GM13976 (cell line): ENCODE measurements at regions of chr7 and their contacts with region 1.

Region 1: DNA sequence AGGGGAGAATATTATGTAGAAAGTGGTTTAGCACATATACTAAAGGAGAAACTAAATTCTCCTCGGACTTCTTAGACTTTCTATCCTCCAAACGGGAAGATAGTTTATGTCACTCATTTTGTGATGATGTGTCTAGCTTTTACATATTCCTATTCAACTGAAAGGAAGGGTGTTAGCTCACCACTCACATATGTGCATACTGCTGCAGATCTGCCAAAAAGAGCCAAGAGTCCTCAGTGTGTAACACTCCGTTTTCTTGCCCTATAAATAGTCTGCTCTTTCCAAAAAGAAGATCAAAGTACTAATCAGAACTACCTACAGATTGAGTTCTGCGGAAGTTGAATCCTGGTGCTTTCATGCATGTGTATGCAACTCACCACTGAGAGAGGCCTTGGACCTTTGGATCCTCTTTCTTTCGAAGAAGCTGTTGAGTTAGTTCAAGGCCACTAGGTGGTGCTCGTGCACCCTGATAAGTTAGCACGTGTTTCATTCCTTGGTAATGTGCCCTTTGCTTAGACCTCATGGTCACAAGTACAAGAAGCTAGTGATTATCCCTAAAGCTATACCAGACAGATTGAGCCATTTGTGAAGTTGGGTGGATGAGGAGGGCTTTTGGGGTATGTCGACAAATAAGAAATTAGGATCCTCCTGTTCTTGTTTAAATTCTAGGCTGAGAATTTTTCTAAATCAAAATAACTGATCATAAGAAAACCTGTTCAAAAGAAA is 14.1 kb downstream of the YAE1 start:
- DNase-seq: peak; percentile 82
- CTCF ChIP-seq: peak; percentile 83

Region 2: DNA sequence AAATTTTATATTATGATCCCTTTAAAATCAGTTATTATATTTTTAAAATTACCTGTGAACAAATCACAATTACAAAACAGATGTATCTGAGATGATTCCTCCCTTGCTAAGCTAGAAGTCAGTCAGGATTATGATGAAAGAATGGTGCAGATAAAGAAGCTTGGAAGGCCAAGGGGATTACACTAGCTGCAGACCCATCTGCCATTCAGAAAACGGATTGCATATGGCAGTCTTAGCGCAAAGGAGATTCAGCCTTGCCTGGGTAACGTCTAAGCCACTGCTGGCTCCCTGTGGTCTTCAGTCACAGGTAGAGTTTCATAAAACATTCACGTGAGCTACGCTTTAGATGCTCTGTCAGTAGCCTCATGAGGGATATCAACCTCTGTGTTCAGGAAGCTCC is 380.4 kb before region 1 on chr7:
- in situ Hi-C with region 1: no loop called
- DNase-seq: no peak
- CTCF ChIP-seq: no peak

Region 3: GRCh38 chr7:39741942-39742623 is 161.8 kb after region 1 on chr7:
- in situ Hi-C with region 1: loop called (anchors 5 kb)
- DNase-seq: no peak
- CTCF ChIP-seq: peak; percentile 30

Region 4: DNA sequence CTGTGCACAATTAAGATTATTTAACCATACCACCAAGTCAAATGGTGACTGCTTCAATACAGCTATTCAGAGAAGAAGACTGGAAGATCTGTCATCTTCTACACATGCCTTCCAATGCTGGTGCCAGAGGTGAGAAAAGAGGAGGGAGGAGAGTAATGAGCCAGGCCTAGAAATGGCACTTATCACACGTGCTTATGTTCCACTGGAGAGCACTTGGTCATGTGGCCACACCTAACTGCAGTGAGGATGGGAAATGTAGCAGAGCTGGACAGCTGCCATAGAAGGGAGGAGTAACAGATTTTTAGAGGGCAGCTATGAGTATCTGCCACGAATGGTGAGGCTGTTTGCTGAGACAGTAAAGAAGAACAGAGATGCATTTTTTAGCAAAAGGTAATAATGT is 477.0 kb after region 1 on chr7:
- in situ Hi-C with region 1: loop called (anchors 25 kb)
- DNase-seq: no peak
- CTCF ChIP-seq: no peak